Activated CD4-positive, alpha-beta T cell treated with anti-CD3 and anti-CD28 coated beads for 36 hours (primary cell): ENCODE measurements at regions of chr14 and their contacts with region 1.

Region 1: GRCh38 chr14:94129111-94129757 is at the start of gene IFI27L2:
- DNase-seq: peak; percentile 85
- ATAC-seq: peak; percentile 97
- H3K4me3 Mint-ChIP-seq: peak within 1 kb of the TSS; percentile 78
- H3K27ac Mint-ChIP-seq: peak within 1 kb of the TSS; percentile 37
- H3K4me1 Mint-ChIP-seq: peaks cover 21% of the 10 kb centered on the region
- H3K27me3 Mint-ChIP-seq: peaks cover 4% of the 10 kb centered on the region
- total RNA-seq, gene IFI27L2: 57.3 to 66.9 TPM

Region 2: DNA sequence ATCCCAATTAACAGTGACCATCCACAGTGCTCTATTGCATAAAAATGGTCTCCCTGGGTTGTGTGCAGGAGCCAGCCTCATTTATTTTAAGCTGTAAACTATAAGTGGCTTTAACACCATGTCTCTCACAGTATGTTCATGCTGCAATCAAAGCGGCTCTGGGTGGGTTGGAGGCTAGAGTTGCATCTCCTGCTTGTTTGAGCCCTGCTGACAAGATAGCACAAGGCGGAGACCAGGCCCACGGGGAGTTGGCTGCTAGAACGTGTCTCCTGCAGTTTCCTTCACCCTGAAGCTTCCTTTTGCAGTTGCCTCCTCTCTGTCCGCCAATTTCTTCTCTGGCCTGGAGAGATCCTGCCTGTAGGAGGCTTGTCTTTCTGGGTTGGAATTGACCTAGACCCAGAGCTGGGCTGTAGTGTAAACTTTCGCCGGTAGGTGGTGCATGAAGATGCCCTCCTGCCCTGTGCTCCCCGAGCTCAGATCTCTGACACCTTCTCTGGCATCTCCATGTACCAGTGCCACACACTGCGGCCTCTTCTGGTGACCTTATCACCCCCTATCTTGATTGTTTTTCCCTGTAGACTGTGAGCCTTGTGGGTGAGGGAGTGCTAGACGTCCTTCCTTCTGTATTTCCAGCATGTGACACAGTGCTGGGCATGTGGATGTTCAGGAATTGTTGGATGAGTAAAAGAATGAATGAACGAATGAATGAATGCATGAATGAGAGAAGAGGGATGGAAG is 92.8 kb before region 1 on chr14:
- CTCF ChIA-PET with region 1: interaction called, 18 read pairs
- POLR2A ChIA-PET with region 1: no interaction called
- intact Hi-C with region 1: loop called in 1 of 2 experiments (anchors 1 kb)
- DNase-seq: peak; percentile 89
- ATAC-seq: peak; percentile 100
- H3K4me3 Mint-ChIP-seq: no peak overlapping the region
- H3K27ac Mint-ChIP-seq: no peak overlapping the region
- H3K4me1 Mint-ChIP-seq: peaks cover 3% of the 10 kb centered on the region
- H3K27me3 Mint-ChIP-seq: no peaks in the 10 kb centered on the region

Region 3: GRCh38 chr14:94143239-94143638 is 14.0 kb after region 1 on chr14:
- CTCF ChIA-PET with region 1: interaction called, 19 read pairs
- POLR2A ChIA-PET with region 1: no interaction called
- intact Hi-C with region 1: no loop called
- DNase-seq: peak; percentile 44
- ATAC-seq: peak; percentile 60
- H3K4me3 Mint-ChIP-seq: no peak overlapping the region
- H3K27ac Mint-ChIP-seq: no peak overlapping the region
- H3K4me1 Mint-ChIP-seq: peaks cover 16% of the 10 kb centered on the region
- H3K27me3 Mint-ChIP-seq: no peaks in the 10 kb centered on the region

Region 4: GRCh38 chr14:94180655-94181271 is 51.5 kb after region 1 on chr14:
- CTCF ChIA-PET with region 1: interaction called, 76 read pairs
- POLR2A ChIA-PET with region 1: no interaction called
- intact Hi-C with region 1: loop called in 1 of 2 experiments (anchors 1 kb)
- DNase-seq: peak; percentile 34
- ATAC-seq: peak; percentile 77
- H3K4me3 Mint-ChIP-seq: peak overlapping the region; percentile 81
- H3K27ac Mint-ChIP-seq: peak overlapping the region; percentile 55
- H3K4me1 Mint-ChIP-seq: peaks cover 52% of the 10 kb centered on the region
- H3K27me3 Mint-ChIP-seq: peaks cover 2% of the 10 kb centered on the region

Region 5: DNA sequence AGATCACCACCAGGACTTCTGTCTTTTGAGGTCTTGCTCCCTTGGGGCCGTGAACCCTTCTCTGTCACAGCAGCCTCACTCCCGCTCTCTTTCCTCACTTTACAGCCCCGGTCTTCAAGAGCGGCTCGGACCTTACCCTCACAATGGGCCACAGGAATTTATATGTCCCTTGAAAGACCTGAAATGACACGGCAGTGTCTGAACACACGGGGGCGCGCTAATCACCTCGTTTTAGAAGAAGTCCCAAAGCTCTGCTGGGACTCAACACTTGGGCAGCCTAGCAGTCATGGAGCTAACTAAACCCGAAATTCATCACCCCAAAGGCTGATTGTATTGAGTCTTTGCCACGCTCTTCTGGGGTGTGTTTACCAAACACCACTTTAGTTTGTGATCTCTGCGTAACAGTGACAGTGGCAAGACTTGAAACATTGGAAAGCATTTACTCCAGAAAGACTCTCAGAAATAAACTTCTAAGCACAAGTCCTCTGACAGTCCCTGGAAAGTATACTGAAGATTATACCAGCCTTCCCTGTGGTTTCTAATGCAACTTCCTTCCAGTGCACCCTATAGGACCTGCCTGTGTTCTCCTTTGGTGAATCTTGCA is 294.3 kb after region 1 on chr14:
- CTCF ChIA-PET with region 1: interaction called, 4 read pairs
- POLR2A ChIA-PET with region 1: no interaction called
- intact Hi-C with region 1: loop called in 1 of 2 experiments (anchors 5 kb)
- DNase-seq: peak; percentile 84
- ATAC-seq: peak; percentile 74
- H3K4me3 Mint-ChIP-seq: peak overlapping the region; percentile 6
- H3K27ac Mint-ChIP-seq: peak overlapping the region; percentile 73
- H3K4me1 Mint-ChIP-seq: peaks cover 13% of the 10 kb centered on the region
- H3K27me3 Mint-ChIP-seq: peaks cover 7% of the 10 kb centered on the region

Region 6: GRCh38 chr14:94500264-94500663 is 371.0 kb after region 1 on chr14:
- CTCF ChIA-PET with region 1: no interaction called
- POLR2A ChIA-PET with region 1: no interaction called
- intact Hi-C with region 1: no loop called
- DNase-seq: no peak
- ATAC-seq: no peak
- H3K4me3 Mint-ChIP-seq: no peak overlapping the region
- H3K27ac Mint-ChIP-seq: no peak overlapping the region
- H3K4me1 Mint-ChIP-seq: no peaks in the 10 kb centered on the region
- H3K27me3 Mint-ChIP-seq: peaks cover 11% of the 10 kb centered on the region

Region 7: GRCh38 chr14:94548999-94549985 is 420.1 kb after region 1 on chr14:
- CTCF ChIA-PET with region 1: interaction called, 5 read pairs
- POLR2A ChIA-PET with region 1: no interaction called
- intact Hi-C with region 1: loop called (anchors 1 to 5 kb)
- DNase-seq: peak; percentile 84
- ATAC-seq: peak; percentile 74
- H3K4me3 Mint-ChIP-seq: no peak overlapping the region
- H3K27ac Mint-ChIP-seq: no peak overlapping the region
- H3K4me1 Mint-ChIP-seq: no peaks in the 10 kb centered on the region
- H3K27me3 Mint-ChIP-seq: peaks cover 29% of the 10 kb centered on the region